Heart right ventricle (tissue), 16 donors: ENCODE measurements at regions of chr6 and their contacts with region 1.

Region 1: GRCh38 chr6:47651505-47651944 is 46.9 kb upstream of the ADGRF4 start:
- DNase-seq: no peak
- ATAC-seq: peak in 6 of 8 donors; percentile 30 to 71 (median 37)
- H3K4me3 ChIP-seq: no peak overlapping the region
- H3K27ac ChIP-seq: peak overlapping the region in 7 of 10 donors; percentile 17 to 67 (median 56)
- H3K4me1 ChIP-seq: peaks cover 5 to 27% (median 16%) of the 10 kb centered on the region in 9 donors
- H3K27me3 ChIP-seq: no peaks in the 10 kb centered on the region
- CTCF ChIP-seq: no peak

Region 2: DNA sequence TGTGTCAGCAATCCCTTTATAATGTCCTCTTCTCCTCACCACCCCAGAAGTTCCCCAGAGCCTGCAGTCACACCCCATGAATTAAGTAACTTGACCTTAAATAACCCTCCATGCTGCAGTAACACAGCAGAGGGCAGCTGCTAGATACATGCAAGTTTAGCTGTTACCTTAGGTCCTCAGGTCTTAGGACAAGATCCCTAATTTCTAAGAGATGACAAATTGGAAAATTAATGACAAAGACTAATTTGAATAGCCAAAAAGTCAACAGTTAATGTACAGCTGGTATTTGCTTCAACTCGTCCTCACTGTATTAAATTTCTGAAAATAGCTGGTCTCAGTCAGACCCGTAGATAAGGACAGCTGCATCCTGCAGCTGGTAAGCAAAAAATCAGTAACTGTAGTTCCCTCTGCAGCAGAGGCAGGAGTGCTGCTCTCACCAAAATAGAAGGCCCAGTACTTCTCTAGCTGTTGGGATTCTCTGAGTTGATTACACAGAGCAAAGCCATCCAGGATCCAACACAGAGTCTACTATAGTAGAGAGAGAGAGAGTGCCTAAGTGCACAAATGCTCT is 404.2 kb before region 1 on chr6:
- intact Hi-C with region 1: no loop called
- DNase-seq: peak in 1 of 2 donors; percentile 53
- ATAC-seq: peak; percentile 53 to 92 (median 84)
- H3K4me3 ChIP-seq: no peak overlapping the region
- H3K27ac ChIP-seq: peak overlapping the region in 8 of 10 donors; percentile 14 to 65 (median 42)
- H3K4me1 ChIP-seq: peaks cover 0 to 52% (median 41%) of the 10 kb centered on the region in 9 donors
- H3K27me3 ChIP-seq: no peaks in the 10 kb centered on the region
- CTCF ChIP-seq: no peak

Region 3: GRCh38 chr6:47733879-47734558 is 82.5 kb after region 1 on chr6:
- intact Hi-C with region 1: loop called in 1 of 10 experiments (anchors 5 kb)
- DNase-seq: peak in 1 of 2 donors; percentile 11
- ATAC-seq: no peak
- H3K4me3 ChIP-seq: no peak overlapping the region
- H3K27ac ChIP-seq: no peak overlapping the region
- H3K4me1 ChIP-seq: peaks cover 0 to 8% (median 4%) of the 10 kb centered on the region in 9 donors
- H3K27me3 ChIP-seq: no peaks in the 10 kb centered on the region
- CTCF ChIP-seq: peak in 8 of 9 donors; percentile 36 to 64 (median 46)

Region 4: GRCh38 chr6:47741807-47742206 is 90.3 kb after region 1 on chr6:
- intact Hi-C with region 1: loop called in 2 of 10 experiments (anchors 5 kb)
- DNase-seq: peak in 1 of 2 donors; percentile 37
- ATAC-seq: peak; percentile 82 to 99 (median 96)
- H3K4me3 ChIP-seq: no peak overlapping the region
- H3K27ac ChIP-seq: peak overlapping the region in 6 of 10 donors; percentile 39 to 72 (median 65)
- H3K4me1 ChIP-seq: peaks cover 0 to 13% (median 9%) of the 10 kb centered on the region in 9 donors
- H3K27me3 ChIP-seq: no peaks in the 10 kb centered on the region
- CTCF ChIP-seq: no peak

Region 5: GRCh38 chr6:47944846-47945245 is 293.3 kb after region 1 on chr6:
- intact Hi-C with region 1: no loop called
- DNase-seq: no peak
- ATAC-seq: no peak
- H3K4me3 ChIP-seq: no peak overlapping the region
- H3K27ac ChIP-seq: no peak overlapping the region
- H3K4me1 ChIP-seq: no peaks in the 10 kb centered on the region
- H3K27me3 ChIP-seq: no peaks in the 10 kb centered on the region
- CTCF ChIP-seq: no peak